SK-N-SH (cell line): ENCODE measurements at regions of chr22 and their contacts with region 1.

Region 1: DNA sequence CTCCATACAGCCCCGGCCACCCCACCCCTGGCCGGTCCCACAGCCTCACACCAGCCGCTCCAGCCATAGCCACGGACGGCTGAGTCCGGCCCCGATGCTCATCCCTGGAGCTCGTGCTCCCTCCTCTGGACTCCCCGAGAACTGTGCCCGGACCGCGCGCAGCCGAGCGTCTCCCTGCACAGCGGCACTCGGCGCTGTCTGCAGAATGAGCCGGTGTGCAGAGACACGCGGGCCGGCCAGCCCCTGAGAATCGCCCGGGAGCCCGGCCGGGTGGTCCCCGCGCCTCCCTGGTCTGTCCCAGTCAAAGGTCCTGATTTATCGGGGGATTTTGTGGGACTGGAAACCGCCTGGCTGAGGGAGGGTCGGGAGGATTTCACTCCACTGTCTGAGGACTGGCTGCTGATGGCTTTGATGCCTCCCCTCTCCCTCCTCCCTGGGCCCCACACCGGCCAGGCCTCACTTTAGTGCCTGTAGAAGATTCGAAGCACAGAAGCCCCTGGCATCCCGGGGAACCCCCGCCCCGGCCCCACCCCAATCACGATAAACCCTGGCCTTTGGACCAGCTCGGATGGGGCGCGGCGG is 102.7 kb downstream of the BRD1 start:
- DNase-seq: peak; percentile 93
- H3K4me3 ChIP-seq: no peak overlapping the region
- H3K27ac ChIP-seq: no peak overlapping the region
- H3K4me1 ChIP-seq: peaks cover 0 to 2% of the 10 kb centered on the region in 2 experiments; a peak in 1 of 4 replicates
- H3K27me3 ChIP-seq: peaks cover 9% of the 10 kb centered on the region; the same call in 1 of the 2 replicates
- CTCF ChIP-seq: peak; percentile 39
- EP300 ChIP-seq: no peak
- RAD21 ChIP-seq: peak; percentile 83

Region 2: GRCh38 chr22:49434101-49434611 is 290.8 kb before region 1 on chr22:
- CTCF ChIA-PET with region 1: interaction called, 15 read pairs
- POLR2A ChIA-PET with region 1: no interaction called
- DNase-seq: peak; percentile 60
- H3K4me3 ChIP-seq: no peak overlapping the region
- H3K27ac ChIP-seq: no peak overlapping the region
- H3K4me1 ChIP-seq: no peaks in the 10 kb centered on the region
- H3K27me3 ChIP-seq: no peaks in the 10 kb centered on the region; the same call in 1 of the 2 replicates
- CTCF ChIP-seq: no peak; the same call in 1 of the 2 replicates
- EP300 ChIP-seq: no peak
- RAD21 ChIP-seq: peak; percentile 38; the same call in 1 of the 2 replicates

Region 3: DNA sequence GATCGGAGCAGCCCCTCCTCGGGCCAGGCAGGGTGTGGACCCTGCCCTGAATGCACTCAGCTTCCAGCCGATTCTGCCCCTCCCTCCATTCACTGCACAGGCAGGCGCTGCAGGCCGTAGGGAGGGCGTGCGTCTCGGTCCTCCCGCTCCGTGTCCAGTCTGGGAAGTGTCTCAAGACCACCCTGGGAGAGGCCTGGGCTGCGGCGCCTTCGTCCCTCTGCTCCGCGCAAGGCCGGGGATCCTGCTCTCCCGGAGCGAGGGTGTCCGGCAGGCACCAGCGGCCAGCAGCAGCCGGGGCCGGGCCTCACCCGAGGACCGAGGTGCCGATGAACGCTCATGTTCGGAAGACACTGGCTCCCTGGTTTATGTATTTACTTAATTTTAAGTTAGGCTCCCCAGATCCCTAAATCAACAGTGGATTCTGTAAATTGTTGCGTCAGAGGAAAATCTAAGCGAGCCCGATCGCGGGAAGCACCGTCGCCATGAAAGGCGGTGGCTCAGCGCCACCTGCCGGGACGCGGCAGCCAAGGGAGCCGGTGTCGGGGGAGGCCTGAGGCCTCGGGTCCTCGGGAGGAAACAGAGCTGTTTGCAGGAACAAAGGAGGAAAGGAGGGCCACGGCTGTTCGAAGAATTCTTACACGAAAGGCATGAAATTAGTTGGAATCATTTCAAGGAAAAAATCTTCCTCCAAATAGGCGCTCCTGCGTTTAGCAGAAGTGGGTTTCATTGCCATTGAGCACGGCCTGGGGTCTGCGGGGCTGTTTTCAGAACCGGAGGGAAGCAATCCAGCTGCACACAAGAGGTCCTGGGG is 92.6 kb before region 1 on chr22:
- CTCF ChIA-PET with region 1: interaction called, 15 read pairs
- POLR2A ChIA-PET with region 1: no interaction called
- DNase-seq: peak; percentile 91
- H3K4me3 ChIP-seq: peak overlapping the region in 1 of 2 experiments; percentile 40; a peak in 2 of 4 replicates
- H3K27ac ChIP-seq: no peak overlapping the region
- H3K4me1 ChIP-seq: peaks cover 0 to 5% of the 10 kb centered on the region in 2 experiments; a peak in 1 of 4 replicates
- H3K27me3 ChIP-seq: no peaks in the 10 kb centered on the region; the same call in 1 of the 2 replicates
- CTCF ChIP-seq: peak; percentile 67
- EP300 ChIP-seq: no peak
- RAD21 ChIP-seq: peak; percentile 85

Region 4: GRCh38 chr22:49712195-49712791 is 12.7 kb before region 1 on chr22:
- CTCF ChIA-PET with region 1: interaction called, 14 read pairs
- POLR2A ChIA-PET with region 1: no interaction called
- DNase-seq: no peak
- H3K4me3 ChIP-seq: no peak overlapping the region
- H3K27ac ChIP-seq: no peak overlapping the region
- H3K4me1 ChIP-seq: peaks cover 0 to under 1% of the 10 kb centered on the region in 2 experiments; a peak in 1 of 4 replicates
- H3K27me3 ChIP-seq: no peaks in the 10 kb centered on the region
- CTCF ChIP-seq: no peak
- EP300 ChIP-seq: no peak
- RAD21 ChIP-seq: no peak